ENCODE measurements at regions of chr4 and their contacts with region 1.

Region 1: GRCh38 chr4:39305912-39306677 is 60.1 kb downstream of the RFC1 start:
- DNase-seq: no peak
- H3K4me3 ChIP-seq: no peak overlapping the region
- H3K27ac ChIP-seq: no peak overlapping the region
- H3K4me1 ChIP-seq: no peaks in the 10 kb centered on the region
- H3K27me3 ChIP-seq: no peaks in the 10 kb centered on the region
- CTCF ChIP-seq: no peak

Region 2: DNA sequence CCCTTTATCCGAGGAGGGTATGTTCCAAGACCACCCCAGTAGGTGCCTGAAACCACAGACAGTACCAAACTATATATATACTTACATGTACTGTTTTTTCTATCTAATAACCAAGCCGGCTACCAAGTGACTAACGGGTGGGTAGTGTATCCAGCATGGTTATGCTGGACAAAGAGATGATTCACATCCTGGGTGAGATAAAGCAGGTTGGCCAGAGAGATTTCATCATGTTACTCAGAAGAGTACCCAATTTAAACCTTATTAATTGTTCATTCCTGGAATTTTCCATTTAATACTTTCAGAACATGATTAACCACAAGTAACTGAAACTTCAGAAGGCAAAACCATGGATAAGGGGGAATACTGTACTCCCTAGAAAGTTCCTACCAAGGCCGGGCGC is 13.6 kb after region 1 on chr4:
- intact Hi-C with region 1: loop called (anchors 2 kb)
- DNase-seq: no peak
- H3K4me3 ChIP-seq: no peak overlapping the region
- H3K27ac ChIP-seq: no peak overlapping the region
- H3K4me1 ChIP-seq: no peaks in the 10 kb centered on the region
- H3K27me3 ChIP-seq: no peaks in the 10 kb centered on the region
- CTCF ChIP-seq: no peak